ENCODE measurements at regions of chr12 and their contacts with region 1.

Region 1: GRCh38 chr12:71746983-71747611 is 7.6 kb upstream of the RAB21 start:
- DNase-seq: peak; percentile 61 to 65 (median 62)
- H3K4me3 ChIP-seq: no peak overlapping the region
- H3K4me3 Mint-ChIP-seq: no peak overlapping the region
- H3K27ac ChIP-seq: no peak overlapping the region
- H3K27ac Mint-ChIP-seq: peak overlapping the region in 1 of 7 donors; percentile 9
- H3K4me1 ChIP-seq: no peaks in the 10 kb centered on the region
- H3K4me1 Mint-ChIP-seq: no peaks in the 10 kb centered on the region
- H3K27me3 ChIP-seq: peaks cover 4% of the 10 kb centered on the region
- H3K27me3 Mint-ChIP-seq: peaks cover 7 to 17% of the 10 kb centered on the region in 2 donors

Region 2: GRCh38 chr12:71415336-71416231 is 331.5 kb before region 1 on chr12:
- CTCF ChIA-PET with region 1: interaction called, 115 read pairs
- POLR2A ChIA-PET with region 1: no interaction called
- intact Hi-C with region 1: no loop called
- DNase-seq: peak in 4 of 5 donors; percentile 39 to 47 (median 44)
- H3K4me3 ChIP-seq: no peak overlapping the region
- H3K4me3 Mint-ChIP-seq: no peak overlapping the region
- H3K27ac ChIP-seq: no peak overlapping the region
- H3K27ac Mint-ChIP-seq: no peak overlapping the region
- H3K4me1 ChIP-seq: no peaks in the 10 kb centered on the region
- H3K4me1 Mint-ChIP-seq: no peaks in the 10 kb centered on the region
- H3K27me3 ChIP-seq: no peaks in the 10 kb centered on the region
- H3K27me3 Mint-ChIP-seq: peaks cover 2 to 11% of the 10 kb centered on the region in 2 donors

Region 3: DNA sequence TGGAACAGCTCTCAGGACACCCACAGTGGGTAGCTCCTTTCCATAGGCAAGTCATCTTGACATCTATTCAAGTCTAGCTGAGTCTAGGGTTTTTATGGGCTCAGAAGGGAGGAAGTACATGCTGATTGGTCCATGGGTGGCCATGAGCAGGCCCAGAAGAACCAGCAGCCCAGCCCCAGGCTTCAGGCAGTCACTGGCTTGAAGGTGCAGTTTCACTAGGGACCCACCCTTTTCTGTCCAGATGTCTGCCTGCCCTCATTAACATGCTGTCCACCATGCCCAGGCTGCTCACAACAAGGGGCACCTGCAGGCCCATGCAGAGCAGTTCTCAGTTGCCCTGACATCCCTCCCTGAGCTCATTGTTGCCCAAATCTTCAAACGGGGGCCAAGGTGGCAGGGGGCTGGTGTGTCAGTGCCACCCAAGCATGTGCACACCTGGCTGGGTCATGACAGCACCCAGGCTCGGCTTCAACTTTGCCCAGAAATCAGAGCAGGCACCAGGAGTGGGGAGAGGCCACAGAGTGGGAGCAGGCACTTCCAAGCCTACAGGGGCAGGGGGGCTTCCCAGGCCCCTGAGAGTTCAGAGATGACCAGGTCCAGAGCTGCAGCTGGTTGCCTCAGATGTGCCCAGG is 326.2 kb before region 1 on chr12:
- CTCF ChIA-PET with region 1: interaction called, 115 read pairs
- POLR2A ChIA-PET with region 1: no interaction called
- intact Hi-C with region 1: no loop called
- DNase-seq: no peak
- H3K4me3 ChIP-seq: no peak overlapping the region
- H3K4me3 Mint-ChIP-seq: no peak overlapping the region
- H3K27ac ChIP-seq: no peak overlapping the region
- H3K27ac Mint-ChIP-seq: no peak overlapping the region
- H3K4me1 ChIP-seq: no peaks in the 10 kb centered on the region
- H3K4me1 Mint-ChIP-seq: no peaks in the 10 kb centered on the region
- H3K27me3 ChIP-seq: no peaks in the 10 kb centered on the region
- H3K27me3 Mint-ChIP-seq: peaks cover 7 to 12% of the 10 kb centered on the region in 2 donors

Region 4: DNA sequence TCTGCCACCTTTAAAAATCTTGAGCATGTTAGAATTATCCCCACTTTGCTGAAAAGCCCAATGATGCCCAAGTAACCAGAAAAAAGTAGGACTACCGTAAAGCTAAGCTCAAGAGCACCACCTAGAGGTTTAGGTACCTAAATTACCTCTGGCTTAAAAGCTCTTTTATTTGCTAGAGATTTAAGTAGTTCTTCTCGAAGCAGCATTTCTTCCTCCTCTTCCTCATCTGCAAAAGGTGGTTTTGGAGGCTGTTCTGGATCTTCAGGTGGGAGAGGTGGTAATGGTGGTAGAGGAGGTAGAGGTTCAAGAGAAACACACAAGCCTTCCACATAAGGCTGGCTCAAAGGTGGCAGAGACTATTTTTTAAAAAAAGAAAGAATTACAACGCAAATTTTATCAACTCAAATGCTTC is 110.4 kb before region 1 on chr12:
- CTCF ChIA-PET with region 1: interaction called, 42 read pairs
- POLR2A ChIA-PET with region 1: interaction called, 6 read pairs
- intact Hi-C with region 1: loop called (anchors 1 kb)
- DNase-seq: peak in 4 of 5 donors; percentile 52 to 59 (median 53)
- H3K4me3 ChIP-seq: no peak overlapping the region
- H3K4me3 Mint-ChIP-seq: no peak overlapping the region
- H3K27ac ChIP-seq: no peak overlapping the region
- H3K27ac Mint-ChIP-seq: peak overlapping the region; percentile 25 to 94 (median 83)
- H3K4me1 ChIP-seq: no peaks in the 10 kb centered on the region
- H3K4me1 Mint-ChIP-seq: peaks cover 6 to 17% (median 9%) of the 10 kb centered on the region in 4 donors
- H3K27me3 ChIP-seq: no peaks in the 10 kb centered on the region
- H3K27me3 Mint-ChIP-seq: no peaks in the 10 kb centered on the region

Region 5: DNA sequence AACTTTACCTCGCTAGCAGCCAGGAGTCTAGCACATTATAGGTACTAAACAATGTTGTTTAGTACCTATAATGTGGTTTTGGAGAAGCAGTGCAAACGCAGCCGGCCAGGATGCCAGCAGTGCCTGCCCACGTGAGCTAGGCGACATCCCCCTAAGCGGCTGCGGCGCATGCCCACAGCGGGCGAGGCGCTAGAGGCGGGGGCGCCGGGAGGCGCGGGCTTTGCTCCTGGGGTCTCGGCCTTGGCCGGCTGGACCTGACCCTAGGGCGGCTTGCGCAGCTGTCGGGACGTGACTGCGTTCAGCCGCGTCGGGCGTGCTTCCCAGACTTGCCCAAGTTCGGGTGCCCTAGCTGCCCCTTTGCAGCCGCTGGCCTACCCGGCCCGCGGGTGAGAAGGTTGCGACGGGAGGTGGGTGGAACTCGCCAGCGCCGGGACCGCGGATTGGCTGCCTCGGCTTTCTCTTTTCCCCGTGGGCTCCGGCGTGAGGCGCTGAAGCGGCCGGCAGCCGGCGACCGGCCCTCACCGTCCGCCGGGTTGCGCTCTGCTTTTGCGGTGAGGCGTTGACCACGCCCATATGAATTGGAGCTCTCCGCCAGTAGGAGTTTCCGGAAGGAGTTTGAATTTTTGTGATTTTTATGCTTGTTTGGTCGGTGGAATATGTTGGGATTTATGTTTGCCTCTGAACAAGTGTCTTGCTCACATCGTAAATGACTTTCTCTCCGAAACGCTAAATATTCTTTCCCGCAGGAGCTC is 61.0 kb before region 1 on chr12 and contains the start of gene TMEM19:
- CTCF ChIA-PET with region 1: interaction called, 18 read pairs
- POLR2A ChIA-PET with region 1: interaction called, 4 read pairs
- intact Hi-C with region 1: no loop called
- DNase-seq: peak; percentile 82 to 86 (median 84)
- H3K4me3 ChIP-seq: peak within 1 kb of the TSS; percentile 47 to 73
- H3K4me3 Mint-ChIP-seq: peak within 1 kb of the TSS; percentile 92 to 99 (median 96)
- H3K27ac ChIP-seq: peak within 1 kb of the TSS; percentile 72
- H3K27ac Mint-ChIP-seq: peak within 1 kb of the TSS; percentile 80 to 98 (median 95)
- H3K4me1 ChIP-seq: peaks cover 27% of the 10 kb centered on the region
- H3K4me1 Mint-ChIP-seq: peaks cover 10 to 32% (median 17%) of the 10 kb centered on the region in 4 donors
- H3K27me3 ChIP-seq: no peaks in the 10 kb centered on the region
- H3K27me3 Mint-ChIP-seq: no peaks in the 10 kb centered on the region
- total RNA-seq, gene TMEM19: 10.5 to 14.1 TPM

Region 6: DNA sequence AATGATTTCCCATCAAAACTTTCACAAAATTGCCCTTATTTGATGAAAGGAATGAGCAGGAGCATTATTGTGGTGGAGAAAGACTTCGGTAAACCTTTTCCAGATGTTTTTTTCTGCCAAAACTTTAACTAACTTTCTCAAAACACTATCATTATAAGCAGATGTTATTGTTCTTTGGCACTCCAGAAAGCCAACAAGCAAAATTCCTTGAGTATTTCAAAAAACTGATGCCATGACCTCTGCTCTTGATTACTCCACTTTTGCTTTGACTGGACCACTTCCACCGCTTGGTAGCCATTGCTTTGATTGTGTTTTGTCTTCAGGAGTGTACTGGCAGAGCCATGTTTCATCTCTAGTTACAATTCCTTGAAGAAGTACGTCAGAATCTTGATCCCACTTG is 22.1 kb before region 1 on chr12:
- CTCF ChIA-PET with region 1: interaction called, 10 read pairs
- POLR2A ChIA-PET with region 1: no interaction called
- intact Hi-C with region 1: no loop called
- DNase-seq: no peak
- H3K4me3 ChIP-seq: no peak overlapping the region
- H3K4me3 Mint-ChIP-seq: no peak overlapping the region
- H3K27ac ChIP-seq: no peak overlapping the region
- H3K27ac Mint-ChIP-seq: no peak overlapping the region
- H3K4me1 ChIP-seq: no peaks in the 10 kb centered on the region
- H3K4me1 Mint-ChIP-seq: no peaks in the 10 kb centered on the region
- H3K27me3 ChIP-seq: no peaks in the 10 kb centered on the region
- H3K27me3 Mint-ChIP-seq: no peaks in the 10 kb centered on the region

Region 7: DNA sequence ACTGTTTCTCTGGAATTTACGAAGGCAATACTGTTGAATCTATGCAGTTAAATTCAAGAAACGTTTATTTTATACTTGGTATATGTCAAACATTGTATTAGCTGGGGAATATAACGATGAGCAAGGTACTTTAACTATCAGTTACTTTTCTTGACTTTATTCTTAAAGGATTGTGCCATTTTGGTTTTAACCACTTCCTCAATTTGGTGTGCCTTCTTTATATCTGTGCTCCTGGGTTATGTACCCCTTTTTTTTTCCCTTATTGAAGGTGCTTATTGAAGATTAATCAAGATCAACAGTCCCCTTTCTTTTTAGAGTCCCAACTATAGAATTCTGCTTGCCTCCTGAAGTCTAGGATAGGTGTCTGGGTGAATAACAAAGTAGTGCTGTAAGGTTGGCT is 13.4 kb after region 1 on chr12:
- CTCF ChIA-PET with region 1: interaction called, 24 read pairs
- POLR2A ChIA-PET with region 1: interaction called, 3 read pairs
- intact Hi-C with region 1: no loop called
- DNase-seq: no peak
- H3K4me3 ChIP-seq: no peak overlapping the region
- H3K4me3 Mint-ChIP-seq: peak overlapping the region in 3 of 8 donors; percentile 1 to 50 (median 30)
- H3K27ac ChIP-seq: no peak overlapping the region
- H3K27ac Mint-ChIP-seq: peak overlapping the region in 1 of 7 donors; percentile 52
- H3K4me1 ChIP-seq: peaks cover 41% of the 10 kb centered on the region
- H3K4me1 Mint-ChIP-seq: peaks cover 39 to 76% (median 58%) of the 10 kb centered on the region in 4 donors
- H3K27me3 ChIP-seq: no peaks in the 10 kb centered on the region
- H3K27me3 Mint-ChIP-seq: no peaks in the 10 kb centered on the region

Region 8: GRCh38 chr12:71958993-71959578 is 212.0 kb after region 1 on chr12:
- CTCF ChIA-PET with region 1: no interaction called
- POLR2A ChIA-PET with region 1: no interaction called
- intact Hi-C with region 1: no loop called
- DNase-seq: no peak
- H3K4me3 ChIP-seq: no peak overlapping the region
- H3K4me3 Mint-ChIP-seq: no peak overlapping the region
- H3K27ac ChIP-seq: no peak overlapping the region
- H3K27ac Mint-ChIP-seq: no peak overlapping the region
- H3K4me1 ChIP-seq: no peaks in the 10 kb centered on the region
- H3K4me1 Mint-ChIP-seq: no peaks in the 10 kb centered on the region
- H3K27me3 ChIP-seq: no peaks in the 10 kb centered on the region
- H3K27me3 Mint-ChIP-seq: peaks cover 4 to 17% of the 10 kb centered on the region in 2 donors